Activated CD4-positive, alpha-beta T cell treated with anti-CD3 and anti-CD28 coated beads, Interleukin-2, amount 10 ng/mL, durations not matched to agents 7 days and 5 days (primary cell): ENCODE measurements at regions of chr10 and their contacts with region 1.

Region 1: GRCh38 chr10:71771821-71772617 is 1.3 kb downstream of the VSIR start:
- DNase-seq: peak; percentile 37
- H3K4me3 Mint-ChIP-seq: peak overlapping the region; percentile 95
- H3K27ac Mint-ChIP-seq: peak overlapping the region; percentile 86
- H3K4me1 Mint-ChIP-seq: peaks cover 85% of the 10 kb centered on the region
- H3K27me3 Mint-ChIP-seq: no peaks in the 10 kb centered on the region

Region 2: DNA sequence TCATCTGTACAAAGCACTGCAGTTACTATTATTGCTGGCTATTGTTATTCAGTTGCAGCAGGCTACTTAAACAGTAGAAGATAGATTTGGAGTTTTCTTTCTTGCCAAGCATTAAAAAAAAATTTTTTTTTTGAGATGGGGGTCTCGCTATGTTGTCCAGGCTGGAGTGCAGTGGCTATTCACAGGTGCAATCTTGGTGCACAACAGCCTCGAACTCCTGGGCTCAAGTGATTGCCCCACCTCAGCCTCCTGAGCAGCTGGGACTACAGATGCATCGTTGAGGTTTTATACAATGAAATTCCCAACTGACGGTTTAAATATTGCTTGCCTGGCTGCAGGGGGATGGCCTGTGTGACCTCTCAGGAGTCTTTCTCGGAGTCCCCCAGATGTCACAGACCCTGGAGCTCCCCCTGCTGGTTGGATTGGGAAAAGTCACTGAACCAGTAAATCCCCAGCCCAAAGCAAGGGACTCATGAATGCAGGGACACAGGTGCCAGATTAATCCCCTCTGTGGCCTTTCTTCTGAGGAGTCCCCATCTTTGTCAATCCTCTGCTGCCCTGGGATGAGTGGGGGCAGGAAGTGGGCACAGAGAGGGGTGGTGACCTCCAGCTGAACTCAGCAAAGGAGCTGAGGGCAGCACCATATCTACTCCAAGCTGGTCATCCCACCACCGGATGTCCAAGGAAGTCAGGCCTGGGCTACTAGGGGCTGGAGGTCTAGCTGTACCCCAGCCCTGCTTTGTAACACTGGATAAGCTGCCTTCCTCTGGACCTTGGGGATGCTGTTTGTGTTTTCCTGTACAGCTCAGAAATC is 202.0 kb before region 1 on chr10:
- CTCF ChIA-PET with region 1: no interaction called
- POLR2A ChIA-PET with region 1: no interaction called
- DNase-seq: peak; percentile 84
- H3K4me3 Mint-ChIP-seq: no peak overlapping the region
- H3K27ac Mint-ChIP-seq: no peak overlapping the region
- H3K4me1 Mint-ChIP-seq: no peaks in the 10 kb centered on the region
- H3K27me3 Mint-ChIP-seq: no peaks in the 10 kb centered on the region

Region 3: GRCh38 chr10:71638064-71638821 is 133.8 kb before region 1 on chr10:
- CTCF ChIA-PET with region 1: no interaction called
- POLR2A ChIA-PET with region 1: no interaction called
- DNase-seq: no peak
- H3K4me3 Mint-ChIP-seq: no peak overlapping the region
- H3K27ac Mint-ChIP-seq: no peak overlapping the region
- H3K4me1 Mint-ChIP-seq: peaks cover 6% of the 10 kb centered on the region
- H3K27me3 Mint-ChIP-seq: no peaks in the 10 kb centered on the region

Region 4: DNA sequence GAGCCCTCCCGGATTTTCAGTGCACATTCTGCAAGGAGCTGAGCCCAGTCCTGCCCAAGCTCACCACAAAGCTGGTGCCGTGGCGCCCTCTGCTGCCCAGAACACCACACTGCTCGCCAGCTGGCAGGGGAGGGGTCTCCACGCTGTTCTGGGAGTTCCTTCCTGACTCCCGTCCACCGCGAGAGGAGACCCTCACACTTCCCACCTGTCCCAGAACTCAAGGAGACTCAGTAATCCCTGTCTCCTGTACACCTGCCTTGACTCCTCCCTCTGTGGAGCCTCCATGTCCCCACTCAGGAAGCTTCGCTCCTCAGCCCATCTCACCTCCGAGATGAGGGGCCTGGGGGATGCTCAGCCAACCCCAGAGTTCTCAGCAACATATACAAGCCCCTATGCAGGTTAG is 63.7 kb before region 1 on chr10:
- CTCF ChIA-PET with region 1: interaction called, 32 read pairs
- POLR2A ChIA-PET with region 1: no interaction called
- DNase-seq: peak; percentile 64
- H3K4me3 Mint-ChIP-seq: no peak overlapping the region
- H3K27ac Mint-ChIP-seq: peak overlapping the region; percentile 80
- H3K4me1 Mint-ChIP-seq: peaks cover 39% of the 10 kb centered on the region
- H3K27me3 Mint-ChIP-seq: no peaks in the 10 kb centered on the region

Region 5: GRCh38 chr10:71719042-71719441 is 53.0 kb before region 1 on chr10:
- CTCF ChIA-PET with region 1: interaction called, 10 read pairs
- POLR2A ChIA-PET with region 1: no interaction called
- DNase-seq: no peak
- H3K4me3 Mint-ChIP-seq: no peak overlapping the region
- H3K27ac Mint-ChIP-seq: no peak overlapping the region
- H3K4me1 Mint-ChIP-seq: peaks cover 37% of the 10 kb centered on the region
- H3K27me3 Mint-ChIP-seq: no peaks in the 10 kb centered on the region

Region 6: GRCh38 chr10:71748671-71749191 is 23.3 kb before region 1 on chr10:
- CTCF ChIA-PET with region 1: interaction called, 39 read pairs
- POLR2A ChIA-PET with region 1: interaction called, 7 read pairs
- DNase-seq: peak; percentile 93
- H3K4me3 Mint-ChIP-seq: peak overlapping the region; percentile 67
- H3K27ac Mint-ChIP-seq: peak overlapping the region; percentile 97
- H3K4me1 Mint-ChIP-seq: peaks cover 97% of the 10 kb centered on the region
- H3K27me3 Mint-ChIP-seq: no peaks in the 10 kb centered on the region

Region 7: DNA sequence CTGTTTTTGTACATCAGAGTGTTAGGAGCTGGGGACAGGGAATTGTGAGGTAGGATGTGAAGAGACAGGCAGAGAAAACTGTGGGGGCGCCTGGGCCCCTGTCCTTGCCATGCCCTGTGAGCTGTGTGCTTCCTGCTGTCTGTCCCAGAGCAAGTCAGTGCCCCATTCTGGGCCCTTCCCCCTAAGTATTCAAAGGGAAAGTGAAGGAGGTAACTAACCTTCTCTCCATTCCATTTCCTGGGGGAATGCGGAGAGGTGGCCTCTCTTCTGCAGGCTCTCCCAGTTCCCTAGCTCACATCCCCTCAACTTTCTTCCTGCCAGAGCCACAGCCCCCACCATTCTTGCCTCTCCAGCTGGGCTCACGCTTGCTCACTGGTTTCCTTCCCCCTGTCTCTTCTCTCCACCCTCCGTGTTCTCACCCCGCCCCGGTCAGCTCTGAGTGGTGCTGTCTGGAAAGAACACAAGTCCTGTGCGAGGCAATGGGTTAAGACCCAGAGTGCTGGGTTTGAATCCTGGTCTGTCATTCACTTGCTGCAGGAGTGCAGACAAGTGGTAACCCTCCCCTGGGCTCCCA is 11.0 kb after region 1 on chr10:
- CTCF ChIA-PET with region 1: interaction called, 12 read pairs
- POLR2A ChIA-PET with region 1: no interaction called
- DNase-seq: no peak
- H3K4me3 Mint-ChIP-seq: no peak overlapping the region
- H3K27ac Mint-ChIP-seq: no peak overlapping the region
- H3K4me1 Mint-ChIP-seq: peaks cover 33% of the 10 kb centered on the region
- H3K27me3 Mint-ChIP-seq: no peaks in the 10 kb centered on the region